ENCODE measurements at regions of chr14 and their contacts with region 1.

Region 1: DNA sequence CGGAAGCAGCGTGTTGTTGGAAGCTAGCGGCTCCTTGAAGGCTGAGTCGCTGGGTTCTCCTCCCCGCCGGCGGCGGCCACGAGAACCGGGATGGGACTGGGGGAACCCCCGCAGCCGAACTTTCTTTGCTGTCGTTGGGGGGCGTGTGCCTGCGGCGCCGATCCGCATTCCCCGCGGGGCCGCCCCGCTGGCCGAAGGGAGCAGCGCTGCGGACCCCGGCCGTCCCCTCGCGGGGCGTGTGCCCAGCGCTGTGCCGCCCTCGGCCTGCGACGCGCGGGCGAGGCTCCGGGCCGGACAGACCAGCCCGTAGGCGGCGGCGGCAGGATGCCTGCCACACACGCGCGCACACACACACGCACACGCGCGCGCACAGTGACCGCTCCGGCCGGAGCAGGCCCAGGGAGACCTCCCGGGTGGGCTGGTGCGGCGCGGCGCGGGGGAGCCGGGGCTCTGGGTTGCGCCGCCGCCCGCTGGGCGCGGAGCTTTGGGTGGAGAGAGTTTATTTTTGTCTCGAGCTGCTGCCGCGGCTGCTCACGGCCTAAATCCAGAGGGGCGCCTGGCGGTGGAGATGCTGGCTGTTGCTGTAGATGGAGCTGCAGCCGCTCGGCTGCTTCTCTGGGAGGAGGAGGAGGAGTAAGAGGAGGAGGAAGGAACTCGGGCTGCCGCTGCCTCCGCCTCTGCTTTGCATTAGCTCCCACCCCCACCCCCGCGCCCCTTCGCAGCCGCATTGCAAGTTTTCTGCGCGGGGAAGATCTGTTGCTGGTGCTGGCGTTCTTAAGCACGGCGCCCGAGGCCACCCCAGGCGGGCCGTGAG is at the start of gene SAMD4A:
- DNase-seq: peak; percentile 76
- CTCF ChIP-seq: peak; percentile 32

Region 2: DNA sequence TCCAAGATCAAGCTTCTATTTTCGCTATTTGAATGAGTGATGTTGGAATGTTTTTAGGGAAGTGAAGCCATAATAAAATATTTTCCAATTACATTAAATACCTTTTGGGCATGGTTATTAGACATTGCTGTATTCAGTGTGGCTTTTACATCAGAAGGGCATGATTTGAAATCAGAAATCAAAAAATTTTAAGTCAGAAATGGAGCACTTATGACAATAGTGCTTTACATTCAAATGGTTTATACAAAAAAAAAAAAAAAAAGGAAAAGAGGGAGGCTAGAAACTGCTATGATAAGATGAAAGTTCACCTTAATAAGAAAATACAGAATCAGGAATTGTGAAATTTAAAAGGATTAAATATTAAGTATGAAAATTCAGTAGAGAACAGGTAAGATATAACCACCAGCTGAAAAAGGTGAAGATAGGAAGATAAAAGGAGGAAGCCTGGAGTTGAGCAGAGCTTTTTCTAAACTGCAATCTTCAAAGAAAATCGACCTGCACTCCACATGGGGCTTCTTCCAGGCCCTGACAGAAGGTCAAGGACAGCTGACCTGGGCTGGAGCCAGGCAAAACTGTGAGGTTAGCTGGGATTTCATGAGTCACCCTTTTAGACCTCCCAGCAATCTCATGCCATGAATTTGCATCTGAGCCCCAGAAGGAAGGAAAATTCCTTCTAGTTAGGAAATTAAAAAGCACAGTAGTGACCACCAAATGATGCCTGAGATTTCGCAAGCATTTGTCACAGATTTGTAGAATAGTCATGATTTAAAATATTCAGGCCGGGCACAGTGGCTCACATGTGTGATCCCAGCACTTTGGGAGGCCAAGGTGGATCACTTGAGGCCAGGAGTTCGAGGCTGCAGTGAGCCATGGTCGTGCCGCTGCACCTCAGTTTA is 586.6 kb before region 1 on chr14:
- CTCF ChIA-PET with region 1: no interaction called
- POLR2A ChIA-PET with region 1: no interaction called
- DNase-seq: no peak
- CTCF ChIP-seq: no peak

Region 3: DNA sequence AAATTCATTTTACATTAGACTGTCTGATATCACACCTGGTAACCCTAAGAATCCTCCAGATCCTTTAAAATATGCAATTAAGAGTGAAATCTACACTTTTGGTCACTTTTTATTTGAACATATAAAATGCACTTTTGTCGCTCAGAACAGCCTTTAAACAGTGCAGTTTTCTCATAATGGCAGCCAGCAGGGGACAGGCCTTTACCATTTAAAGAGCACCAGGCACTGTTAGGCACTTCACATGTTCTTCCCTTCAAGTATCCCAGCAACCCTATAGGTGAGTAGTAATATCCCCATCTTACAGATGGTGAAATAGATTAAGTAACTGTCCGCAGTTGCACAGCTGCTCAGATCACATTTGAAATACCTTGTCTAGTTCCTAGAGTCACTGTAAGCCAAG is 11.0 kb before region 1 on chr14:
- CTCF ChIA-PET with region 1: interaction called, 11 read pairs
- POLR2A ChIA-PET with region 1: no interaction called
- DNase-seq: no peak
- CTCF ChIP-seq: no peak

Region 4: GRCh38 chr14:54642801-54643697 is 76.4 kb after region 1 on chr14:
- CTCF ChIA-PET with region 1: interaction called, 61 read pairs
- POLR2A ChIA-PET with region 1: no interaction called
- DNase-seq: peak; percentile 24
- CTCF ChIP-seq: peak; percentile 34

Region 5: DNA sequence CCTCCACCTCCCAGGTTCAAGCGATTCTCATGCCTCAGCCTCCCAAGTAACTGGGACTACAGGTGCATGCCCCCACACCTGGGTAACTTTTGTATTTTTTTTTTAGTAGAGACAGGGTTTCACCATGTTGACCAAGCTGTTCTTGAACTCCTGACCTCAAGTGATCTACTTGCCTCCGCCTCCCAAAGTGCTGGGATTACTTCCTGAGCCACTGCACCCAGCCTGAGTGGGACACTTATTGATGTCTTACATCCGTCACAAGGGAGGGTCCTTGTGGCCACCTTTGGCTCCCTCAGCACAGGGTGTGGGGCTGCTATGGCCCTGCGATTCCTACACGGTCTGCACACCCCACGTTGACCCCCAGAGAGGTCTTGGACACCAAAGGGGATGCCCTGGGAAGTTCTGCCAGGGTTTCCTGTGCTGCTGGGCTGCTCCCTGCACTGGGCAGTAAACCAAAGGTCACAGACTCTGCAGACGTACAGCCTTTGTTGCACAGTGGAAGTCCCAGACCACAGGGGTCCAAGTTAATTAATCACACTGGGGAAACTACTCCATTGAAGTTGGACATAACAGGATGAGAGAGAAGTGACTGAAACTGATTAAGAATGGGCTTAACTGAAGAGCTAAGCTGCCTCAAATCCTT is 96.0 kb after region 1 on chr14:
- CTCF ChIA-PET with region 1: interaction called, 3 read pairs
- POLR2A ChIA-PET with region 1: interaction called, 10 read pairs
- DNase-seq: no peak
- CTCF ChIP-seq: no peak

Region 6: GRCh38 chr14:54691525-54692283 is 125.1 kb after region 1 on chr14:
- CTCF ChIA-PET with region 1: interaction called, 131 read pairs
- POLR2A ChIA-PET with region 1: no interaction called
- DNase-seq: peak; percentile 48
- CTCF ChIP-seq: peak; percentile 87

Region 7: DNA sequence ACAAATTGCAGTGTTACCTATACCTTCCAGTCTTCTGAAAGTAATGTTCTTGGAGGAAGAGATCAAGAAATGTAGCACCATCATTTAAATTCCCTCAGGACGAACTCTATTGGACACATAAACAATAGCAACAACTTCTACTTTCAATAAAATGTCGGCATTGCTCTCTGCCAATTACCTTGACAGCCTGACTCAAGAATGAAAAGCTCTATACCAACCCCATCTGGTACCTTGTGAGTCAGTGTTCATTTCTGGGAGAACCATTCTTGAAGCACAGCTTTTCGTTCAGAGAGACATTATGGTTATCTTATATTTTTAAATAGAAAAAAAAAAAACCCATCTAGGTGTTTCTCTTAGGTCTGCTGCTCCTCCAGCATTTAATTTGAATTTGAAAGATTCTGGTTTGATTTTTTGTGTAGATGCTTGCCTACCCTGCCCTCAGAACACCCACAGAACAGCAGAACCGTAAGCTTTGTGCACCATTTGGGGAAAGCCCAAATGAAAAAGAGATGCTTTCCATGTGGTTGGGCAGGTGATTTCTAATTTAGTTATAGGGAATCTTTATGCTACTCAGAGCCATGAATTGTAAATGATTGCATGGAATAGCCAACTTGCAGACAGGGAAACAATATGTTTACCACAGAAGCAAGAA is 156.3 kb after region 1 on chr14:
- CTCF ChIA-PET with region 1: interaction called, 18 read pairs
- POLR2A ChIA-PET with region 1: no interaction called
- DNase-seq: peak; percentile 29
- CTCF ChIP-seq: peak; percentile 69

Region 8: GRCh38 chr14:54805521-54806322 is 239.1 kb after region 1 on chr14:
- CTCF ChIA-PET with region 1: interaction called, 25 read pairs
- POLR2A ChIA-PET with region 1: no interaction called
- DNase-seq: peak; percentile 82
- CTCF ChIP-seq: peak; percentile 91